Esophagus muscularis mucosa (tissue), 4 donors: ENCODE measurements at regions of chr4 and their contacts with region 1.

Region 1: GRCh38 chr4:118989098-118990080 is 100.7 kb downstream of the SYNPO2 start:
- DNase-seq: peak; percentile 91
- H3K4me3 ChIP-seq: peak overlapping the region in 1 of 4 donors; percentile 8
- H3K27ac ChIP-seq: peak overlapping the region; percentile 85 to 91 (median 90)
- H3K4me1 ChIP-seq: peaks cover 66 to 98% (median 95%) of the 10 kb centered on the region in 4 donors
- H3K27me3 ChIP-seq: no peaks in the 10 kb centered on the region
- CTCF ChIP-seq: no peak
- EP300 ChIP-seq: no peak
- POLR2A ChIP-seq: no peak

Region 2: DNA sequence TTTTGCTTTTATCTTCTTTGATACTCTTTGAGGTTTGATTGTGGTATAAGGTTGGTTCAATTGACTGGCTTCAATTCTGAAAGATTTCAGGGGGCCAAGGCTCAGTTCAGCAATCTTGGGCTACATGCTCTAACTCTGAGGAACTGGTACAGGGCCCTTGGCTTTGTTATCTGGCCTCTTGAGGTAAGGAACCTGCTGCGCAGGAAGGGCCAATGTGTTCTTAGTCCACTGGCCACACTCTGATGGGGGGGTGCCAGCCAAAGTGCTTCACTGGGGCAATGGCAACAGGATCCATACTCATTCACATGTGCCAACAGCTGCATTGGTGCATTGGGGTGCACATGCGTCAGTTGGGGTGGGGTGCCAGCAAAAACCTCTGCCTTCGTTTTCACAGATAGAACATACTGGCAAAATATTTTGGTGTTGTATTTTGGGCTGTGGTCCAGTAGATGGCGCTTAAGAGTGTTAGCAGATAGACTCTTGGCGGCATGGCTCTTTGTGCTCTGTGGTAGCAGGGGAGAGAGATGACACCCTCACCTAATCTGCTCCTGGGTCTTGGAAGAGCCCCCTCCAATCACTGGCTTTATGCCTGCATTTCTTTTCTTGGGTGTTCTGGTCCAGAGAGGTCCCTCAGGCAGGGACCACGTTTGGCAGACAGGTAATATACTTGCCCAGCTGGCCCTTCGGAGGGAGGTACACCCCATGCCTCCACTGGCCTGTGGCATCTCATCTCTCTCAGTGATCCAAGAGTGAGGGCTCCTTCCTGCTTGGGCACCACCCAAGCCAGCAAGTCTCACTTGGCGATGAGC is 912.2 kb before region 1 on chr4:
- intact Hi-C with region 1: no loop called
- DNase-seq: no peak
- H3K4me3 ChIP-seq: no peak overlapping the region
- H3K27ac ChIP-seq: no peak overlapping the region
- H3K4me1 ChIP-seq: no peaks in the 10 kb centered on the region
- H3K27me3 ChIP-seq: no peaks in the 10 kb centered on the region
- CTCF ChIP-seq: no peak
- EP300 ChIP-seq: no peak
- POLR2A ChIP-seq: no peak

Region 3: GRCh38 chr4:119025916-119026661 is 36.7 kb after region 1 on chr4:
- intact Hi-C with region 1: loop called (anchors 5 kb)
- DNase-seq: no peak
- H3K4me3 ChIP-seq: peak overlapping the region; percentile 55 to 63 (median 62)
- H3K27ac ChIP-seq: peak overlapping the region; percentile 91 to 98 (median 94)
- H3K4me1 ChIP-seq: peaks cover 21 to 54% (median 36%) of the 10 kb centered on the region in 4 donors
- H3K27me3 ChIP-seq: no peaks in the 10 kb centered on the region
- CTCF ChIP-seq: no peak
- EP300 ChIP-seq: peak; percentile 91
- POLR2A ChIP-seq: no peak

Region 4: GRCh38 chr4:119260528-119261250 is 271.3 kb after region 1 on chr4:
- intact Hi-C with region 1: no loop called
- DNase-seq: no peak
- H3K4me3 ChIP-seq: no peak overlapping the region
- H3K27ac ChIP-seq: no peak overlapping the region
- H3K4me1 ChIP-seq: no peaks in the 10 kb centered on the region
- H3K27me3 ChIP-seq: no peaks in the 10 kb centered on the region
- CTCF ChIP-seq: no peak
- EP300 ChIP-seq: no peak
- POLR2A ChIP-seq: no peak